OCI-LY7 (cell line): ENCODE measurements at regions of chr12 and their contacts with region 1.

Region 1: GRCh38 chr12:106329231-106329982 is 26.9 kb downstream of the TCP11L2 start:
- DNase-seq: no peak
- H3K4me3 ChIP-seq: no peak overlapping the region
- H3K27ac ChIP-seq: no peak overlapping the region
- H3K4me1 ChIP-seq: peaks cover 23% of the 10 kb centered on the region
- CTCF ChIP-seq: no peak

Region 2: DNA sequence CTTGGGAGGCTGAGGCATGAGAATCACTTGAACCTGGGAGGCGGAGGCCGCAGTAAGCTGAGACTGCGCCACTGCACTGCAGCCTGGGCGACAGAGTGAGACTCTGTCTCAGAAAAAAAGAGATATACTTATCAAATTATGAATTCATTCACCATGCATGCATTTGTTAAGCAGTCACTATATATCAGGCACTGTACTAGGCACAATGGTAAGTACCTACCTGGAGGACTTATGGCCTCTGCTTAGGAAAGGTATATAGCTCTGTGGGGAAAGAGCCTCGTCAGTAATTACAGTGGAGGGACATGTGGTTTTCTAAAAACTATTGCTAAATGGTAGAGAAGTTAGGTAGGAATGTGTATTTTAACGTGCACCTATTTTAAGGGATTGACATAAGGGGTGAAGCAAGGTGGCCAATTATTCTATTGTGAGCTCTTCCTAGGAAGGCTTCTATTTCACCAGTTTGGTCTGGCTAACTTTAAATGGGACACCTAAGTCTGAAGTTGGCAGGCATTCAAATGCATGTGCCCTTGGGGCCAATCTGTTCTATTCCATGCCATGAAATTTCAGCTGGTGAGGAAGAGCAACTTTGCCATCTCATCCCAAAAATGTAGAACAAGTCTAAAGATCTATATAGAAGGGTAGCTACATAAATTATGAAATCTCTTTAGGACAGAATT is 11.9 kb before region 1 on chr12:
- CTCF ChIA-PET with region 1: no interaction called
- POLR2A ChIA-PET with region 1: interaction called, 12 read pairs
- intact Hi-C with region 1: no loop called
- DNase-seq: no peak
- H3K4me3 ChIP-seq: no peak overlapping the region
- H3K27ac ChIP-seq: no peak overlapping the region
- H3K4me1 ChIP-seq: no peaks in the 10 kb centered on the region
- CTCF ChIP-seq: no peak

Region 3: DNA sequence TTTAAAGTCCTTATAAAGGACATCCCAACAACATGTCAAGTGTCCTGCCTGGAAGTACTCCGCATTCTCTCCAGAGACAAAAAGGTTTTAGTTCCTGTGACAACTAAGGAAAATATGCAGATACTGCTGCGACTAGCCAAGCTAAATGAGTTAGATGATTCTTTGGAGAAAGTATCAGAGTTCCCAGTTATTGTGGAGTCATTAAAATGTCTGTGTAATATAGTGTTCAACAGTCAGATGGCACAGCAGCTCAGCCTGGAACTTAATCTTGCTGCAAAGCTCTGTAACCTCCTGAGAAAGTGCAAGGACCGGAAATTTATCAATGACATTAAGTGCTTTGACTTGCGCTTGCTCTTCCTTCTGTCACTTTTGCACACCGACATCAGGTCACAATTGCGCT is 485.3 kb after region 1 on chr12:
- CTCF ChIA-PET with region 1: no interaction called
- POLR2A ChIA-PET with region 1: no interaction called
- intact Hi-C with region 1: no loop called
- DNase-seq: no peak
- H3K4me3 ChIP-seq: no peak overlapping the region
- H3K27ac ChIP-seq: no peak overlapping the region
- H3K4me1 ChIP-seq: no peaks in the 10 kb centered on the region
- CTCF ChIP-seq: no peak

Region 4: GRCh38 chr12:106841510-106842302 is 512.3 kb after region 1 on chr12:
- CTCF ChIA-PET with region 1: no interaction called
- POLR2A ChIA-PET with region 1: no interaction called
- intact Hi-C with region 1: no loop called
- DNase-seq: peak; percentile 62
- H3K4me3 ChIP-seq: no peak overlapping the region
- H3K27ac ChIP-seq: no peak overlapping the region
- H3K4me1 ChIP-seq: no peaks in the 10 kb centered on the region
- CTCF ChIP-seq: peak; percentile 94